ENCODE measurements at regions of chr7 and their contacts with region 1.

Region 1: DNA sequence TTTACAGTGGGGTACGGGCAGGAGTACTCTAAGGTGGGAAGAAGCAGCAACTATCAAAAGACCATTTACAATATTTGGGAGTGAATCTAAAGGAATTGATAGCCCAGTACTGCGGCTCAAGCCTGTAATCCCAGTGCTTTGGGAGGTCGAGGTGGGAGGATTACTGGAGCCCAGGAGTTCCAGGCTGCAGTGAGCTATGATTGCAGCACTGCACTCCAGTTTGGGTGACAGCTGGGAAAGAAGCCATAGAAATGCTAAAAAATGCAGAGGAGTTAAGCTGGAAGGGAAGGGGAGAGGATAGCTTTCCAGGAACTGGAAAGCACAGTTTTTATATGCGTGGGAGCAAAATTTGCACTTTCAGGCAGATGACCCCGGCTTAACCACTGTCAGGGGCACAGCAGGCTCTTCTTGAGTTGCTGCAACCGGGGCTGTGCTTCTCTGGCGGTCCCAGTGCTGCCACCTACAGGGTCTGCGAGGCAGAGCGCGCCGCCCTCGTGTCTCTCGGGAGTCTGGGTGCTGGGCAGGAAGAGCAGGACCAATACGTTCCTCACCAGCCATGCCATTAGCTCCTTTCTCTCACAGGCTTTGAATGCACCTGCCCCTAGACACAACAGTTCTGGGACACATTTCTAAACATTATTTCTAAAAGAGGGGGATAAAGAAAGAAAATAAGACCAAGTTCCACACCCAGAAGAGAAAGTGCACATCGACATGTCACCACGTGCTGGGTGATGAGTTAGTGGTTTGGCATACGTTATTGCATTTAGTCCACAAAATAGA is 10.1 kb upstream of the BMPER start:
- DNase-seq: no peak
- H3K4me3 ChIP-seq: no peak overlapping the region; the same call in 1 of the 2 replicates
- CTCF ChIP-seq: peak; percentile 99

Region 2: DNA sequence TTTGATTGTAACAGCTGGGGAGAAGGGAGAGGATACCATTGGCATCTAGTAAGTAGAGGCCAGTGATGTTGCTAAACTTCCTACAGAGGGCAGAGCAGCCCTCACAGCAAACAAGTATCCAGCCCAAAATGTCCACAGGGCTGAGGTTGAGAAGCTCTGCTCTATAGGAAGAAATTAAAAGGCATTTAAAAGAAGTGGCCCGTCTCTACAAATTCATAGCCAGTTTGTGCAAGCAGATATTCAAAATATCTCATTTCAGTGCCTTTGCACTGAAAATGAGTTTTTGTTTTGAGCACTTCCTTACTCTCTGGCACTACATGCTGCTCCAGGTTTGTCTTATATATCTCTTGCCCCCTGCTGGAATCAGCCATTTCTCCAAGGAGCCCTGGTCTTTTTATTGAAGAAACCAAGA is 435.9 kb before region 1 on chr7:
- CTCF ChIA-PET with region 1: interaction called, 23 read pairs
- POLR2A ChIA-PET with region 1: no interaction called
- DNase-seq: peak; percentile 23
- H3K4me3 ChIP-seq: no peak overlapping the region
- CTCF ChIP-seq: peak; percentile 61

Region 3: GRCh38 chr7:33630359-33630758 is 264.9 kb before region 1 on chr7:
- CTCF ChIA-PET with region 1: no interaction called
- POLR2A ChIA-PET with region 1: no interaction called
- DNase-seq: no peak
- H3K4me3 ChIP-seq: no peak overlapping the region
- CTCF ChIP-seq: no peak

Region 4: GRCh38 chr7:33645104-33645503 is 250.1 kb before region 1 on chr7:
- CTCF ChIA-PET with region 1: no interaction called
- POLR2A ChIA-PET with region 1: no interaction called
- DNase-seq: no peak
- H3K4me3 ChIP-seq: no peak overlapping the region
- CTCF ChIP-seq: no peak

Region 5: GRCh38 chr7:33757562-33758165 is 137.6 kb before region 1 on chr7:
- CTCF ChIA-PET with region 1: interaction called, 32 read pairs
- POLR2A ChIA-PET with region 1: no interaction called
- DNase-seq: no peak
- H3K4me3 ChIP-seq: no peak overlapping the region
- CTCF ChIP-seq: peak; percentile 26

Region 6: DNA sequence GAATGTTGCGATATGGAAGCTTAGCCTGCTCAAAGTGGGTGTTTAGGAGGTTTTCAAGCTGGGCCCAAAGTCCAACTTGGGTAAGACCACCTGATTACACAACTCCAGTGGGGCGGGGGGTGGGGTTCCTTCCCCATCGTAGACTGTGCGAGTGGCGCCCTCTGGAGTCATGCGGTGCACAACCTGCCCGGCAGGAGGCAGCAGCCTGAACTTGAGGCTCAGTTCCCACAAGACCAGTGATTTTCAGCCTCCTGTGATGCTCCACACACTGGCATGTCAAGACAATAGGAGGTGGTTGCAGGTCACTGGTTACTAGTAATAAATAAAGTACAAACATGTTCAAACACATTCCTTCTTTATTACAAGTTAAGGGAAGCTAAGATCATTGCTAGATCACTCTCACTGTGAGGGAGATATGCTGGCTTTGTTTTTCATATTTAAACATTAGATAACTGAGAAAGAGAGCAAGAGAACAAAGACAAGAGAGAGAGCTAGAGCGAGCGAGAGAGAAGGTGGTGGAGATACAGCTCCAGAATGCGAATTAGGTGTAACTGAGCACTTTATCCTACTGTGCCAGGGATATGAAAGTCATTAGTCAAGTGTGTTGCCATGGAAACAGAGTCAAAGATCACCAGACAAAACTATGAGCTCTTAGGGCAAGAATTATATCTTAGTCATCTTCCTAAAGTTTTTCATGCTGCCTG is 87.3 kb before region 1 on chr7:
- CTCF ChIA-PET with region 1: interaction called, 11 read pairs
- POLR2A ChIA-PET with region 1: no interaction called
- DNase-seq: peak; percentile 62
- H3K4me3 ChIP-seq: no peak overlapping the region
- CTCF ChIP-seq: peak; percentile 62

Region 7: GRCh38 chr7:33854801-33855350 is 40.3 kb before region 1 on chr7:
- CTCF ChIA-PET with region 1: interaction called, 17 read pairs
- POLR2A ChIA-PET with region 1: no interaction called
- DNase-seq: no peak
- H3K4me3 ChIP-seq: no peak overlapping the region
- CTCF ChIP-seq: no peak

Region 8: DNA sequence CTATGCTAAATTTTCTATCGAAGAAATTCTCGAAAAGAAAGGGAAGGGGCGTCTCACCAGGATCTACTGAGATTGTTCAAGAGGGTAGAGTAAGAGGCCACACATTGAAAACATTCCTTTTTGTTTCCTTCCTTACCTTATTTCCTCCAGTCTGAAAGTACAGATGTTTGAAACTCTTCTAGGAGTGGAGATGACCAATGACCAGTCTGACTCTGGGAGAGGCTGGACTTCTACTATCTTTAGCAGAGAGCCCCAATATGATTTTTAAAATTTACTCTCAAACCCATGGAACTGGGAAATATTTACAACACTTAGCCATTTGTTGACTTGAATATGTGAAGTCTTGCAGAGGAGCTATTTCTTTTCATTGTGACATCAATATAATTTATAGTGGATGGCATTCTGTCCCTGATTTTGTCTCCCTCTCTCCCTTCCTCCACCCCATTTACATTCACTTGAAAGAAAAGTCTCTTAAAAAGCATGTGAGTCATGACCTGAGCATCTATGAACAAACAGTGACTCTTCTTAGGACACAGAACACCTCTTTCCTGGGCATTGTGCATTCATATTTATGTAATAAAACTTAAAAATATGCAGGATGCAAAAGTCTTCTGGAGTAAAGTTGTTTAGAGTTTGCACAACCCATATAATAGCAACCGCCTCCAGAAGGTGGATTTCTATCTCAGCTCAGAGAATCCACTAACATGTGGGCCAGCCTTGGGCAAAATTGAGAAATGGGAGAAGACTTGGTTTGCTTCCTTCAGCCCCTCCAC is 21.0 kb before region 1 on chr7:
- CTCF ChIA-PET with region 1: interaction called, 149 read pairs
- POLR2A ChIA-PET with region 1: no interaction called
- DNase-seq: no peak
- H3K4me3 ChIP-seq: no peak overlapping the region
- CTCF ChIP-seq: no peak

Region 9: DNA sequence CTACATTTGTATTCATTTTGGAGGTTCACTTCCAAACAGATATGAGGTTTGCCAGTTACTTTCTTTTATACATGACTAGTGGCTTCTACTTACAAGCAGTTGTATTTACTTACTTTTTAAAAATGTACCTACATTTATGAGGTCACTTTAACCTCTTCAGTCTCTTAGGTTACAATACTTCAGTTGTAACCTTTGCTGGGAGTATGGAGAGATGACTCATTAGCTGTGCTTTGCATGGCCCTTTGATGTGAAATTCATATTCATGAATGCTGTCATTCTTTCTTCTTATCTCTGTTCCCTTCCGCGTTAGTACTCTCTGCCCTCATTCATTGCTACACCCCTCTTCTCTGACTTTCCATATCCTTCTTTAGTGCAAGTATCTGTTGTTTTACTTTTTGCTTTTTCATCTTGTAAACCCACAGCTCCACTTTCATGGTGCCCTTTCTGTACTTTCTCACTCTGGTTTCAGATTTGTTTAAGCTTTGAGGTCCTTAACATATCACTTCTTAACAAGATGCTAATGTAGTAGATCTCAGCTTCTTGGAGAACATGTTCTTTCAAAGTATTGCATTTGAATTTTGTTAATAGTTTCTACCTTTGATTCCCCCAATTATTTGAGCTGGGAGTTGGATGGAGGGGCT is 174.5 kb after region 1 on chr7:
- CTCF ChIA-PET with region 1: no interaction called
- POLR2A ChIA-PET with region 1: no interaction called
- DNase-seq: no peak
- H3K4me3 ChIP-seq: no peak overlapping the region
- CTCF ChIP-seq: no peak